Aorta (tissue), 5 donors: ENCODE measurements at regions of chr2 and their contacts with region 1.

Region 1: DNA sequence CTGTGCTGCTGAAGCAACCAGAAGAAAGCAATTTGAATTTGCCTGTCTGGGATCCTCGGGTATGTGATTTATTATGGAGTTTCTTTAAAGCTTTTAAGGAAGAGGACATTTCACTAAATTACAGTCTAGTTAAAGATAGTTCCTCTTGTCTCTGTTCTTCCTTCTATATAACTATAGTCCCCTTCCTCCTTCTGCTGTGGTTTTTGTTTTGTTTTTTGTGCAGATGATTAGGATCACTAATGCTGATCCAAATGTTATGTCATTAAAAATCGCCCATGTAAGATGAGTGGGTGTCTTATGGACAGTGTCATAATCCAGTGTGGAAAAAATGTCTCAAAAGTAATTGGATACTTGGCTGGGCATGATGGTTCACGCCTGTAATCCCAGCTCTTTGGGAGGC is 24.7 kb downstream of the PAPOLG start:
- DNase-seq: no peak
- ATAC-seq: no peak
- H3K4me3 ChIP-seq: no peak overlapping the region
- H3K27ac ChIP-seq: no peak overlapping the region
- H3K4me1 ChIP-seq: no peaks in the 10 kb centered on the region
- H3K27me3 ChIP-seq: no peaks in the 10 kb centered on the region

Region 2: GRCh38 chr2:60881047-60881932 is 100.6 kb after region 1 on chr2 and contains the start of gene REL:
- intact Hi-C with region 1: loop called in 1 of 2 experiments (anchors 10 kb)
- DNase-seq: peak; percentile 96 to 97
- ATAC-seq: peak; percentile 98
- H3K4me3 ChIP-seq: peak within 1 kb of the TSS; percentile 87 to 97
- H3K27ac ChIP-seq: peak within 1 kb of the TSS; percentile 59 to 83
- H3K4me1 ChIP-seq: peaks cover 0 to 6% of the 10 kb centered on the region in 2 donors
- H3K27me3 ChIP-seq: no peaks in the 10 kb centered on the region
- total RNA-seq, gene REL: 16.0 to 23.8 TPM